Sigmoid colon (tissue), 7 donors: ENCODE measurements at regions of chr2 and their contacts with region 1.

Region 1: DNA sequence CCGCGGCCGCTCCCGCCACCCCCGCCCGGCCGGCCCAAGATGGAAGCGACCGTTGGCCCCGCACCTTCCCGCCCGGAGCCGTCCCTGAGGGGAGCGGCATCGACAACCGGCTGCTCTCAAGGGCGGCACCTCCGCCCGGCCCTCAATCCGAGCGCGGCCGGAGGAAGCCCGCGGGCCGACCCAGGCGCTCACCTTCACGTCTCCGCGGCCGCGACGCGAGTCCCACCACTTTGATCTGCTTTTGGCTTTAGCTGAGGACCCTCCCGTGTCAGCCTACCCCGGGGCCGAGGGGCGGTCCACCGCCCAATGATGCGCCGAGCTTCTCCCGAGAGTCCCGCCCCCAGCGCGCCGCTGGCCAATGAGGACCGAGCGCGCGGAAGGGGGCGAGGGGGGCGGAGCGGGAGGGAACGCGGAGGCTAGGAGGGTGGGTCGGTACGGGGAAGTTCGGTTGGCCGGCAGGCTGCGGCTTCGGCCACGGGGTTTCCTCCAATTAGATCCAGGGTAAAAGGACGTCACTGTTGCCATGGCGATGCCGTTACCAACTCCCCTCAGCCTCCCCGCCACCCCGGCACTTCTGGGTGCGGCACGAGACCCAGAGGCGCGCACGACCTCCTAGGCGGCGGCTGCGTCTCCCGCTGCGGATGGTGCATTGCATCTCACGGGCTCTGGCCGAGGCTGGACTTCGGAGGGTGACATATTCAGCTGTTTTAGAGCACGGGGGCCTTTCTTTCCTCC is at the start of gene YWHAQ:
- DNase-seq: peak; percentile 100
- H3K4me3 ChIP-seq: peak within 1 kb of the TSS; percentile 71 to 88 (median 82)
- H3K27ac ChIP-seq: peak within 1 kb of the TSS; percentile 95 to 98 (median 98)
- H3K4me1 ChIP-seq: peaks cover 0 to 43% (median 40%) of the 10 kb centered on the region in 4 donors
- H3K27me3 ChIP-seq: no peaks in the 10 kb centered on the region
- CTCF ChIP-seq: no peak
- EP300 ChIP-seq: peak in 2 of 4 donors; percentile 43 to 62
- POLR2A ChIP-seq: peak; percentile 85 to 91
- total RNA-seq, gene YWHAQ: 179 to 273 (median 229) TPM

Region 2: GRCh38 chr2:9423100-9423921 is 207.6 kb before region 1 on chr2 and contains the starts of genes CPSF3 and ITGB1BP1:
- intact Hi-C with region 1: loop called (anchors 5 kb)
- DNase-seq: peak; percentile 99
- H3K4me3 ChIP-seq: peak within 1 kb of the TSS; percentile 84 to 99 (median 93)
- H3K27ac ChIP-seq: peak within 1 kb of the TSS; percentile 94 to 97 (median 96)
- H3K4me1 ChIP-seq: peaks cover 0 to 38% (median 33%) of the 10 kb centered on the region in 4 donors
- H3K27me3 ChIP-seq: no peaks in the 10 kb centered on the region
- CTCF ChIP-seq: peak in 1 of 4 experiments; percentile 31
- EP300 ChIP-seq: peak in 1 of 4 donors; percentile 69
- POLR2A ChIP-seq: no peak
- total RNA-seq, gene CPSF3: 22.9 to 33.5 (median 27.5) TPM
- total RNA-seq, gene ITGB1BP1: 52.3 to 75.6 (median 61.6) TPM

Region 3: DNA sequence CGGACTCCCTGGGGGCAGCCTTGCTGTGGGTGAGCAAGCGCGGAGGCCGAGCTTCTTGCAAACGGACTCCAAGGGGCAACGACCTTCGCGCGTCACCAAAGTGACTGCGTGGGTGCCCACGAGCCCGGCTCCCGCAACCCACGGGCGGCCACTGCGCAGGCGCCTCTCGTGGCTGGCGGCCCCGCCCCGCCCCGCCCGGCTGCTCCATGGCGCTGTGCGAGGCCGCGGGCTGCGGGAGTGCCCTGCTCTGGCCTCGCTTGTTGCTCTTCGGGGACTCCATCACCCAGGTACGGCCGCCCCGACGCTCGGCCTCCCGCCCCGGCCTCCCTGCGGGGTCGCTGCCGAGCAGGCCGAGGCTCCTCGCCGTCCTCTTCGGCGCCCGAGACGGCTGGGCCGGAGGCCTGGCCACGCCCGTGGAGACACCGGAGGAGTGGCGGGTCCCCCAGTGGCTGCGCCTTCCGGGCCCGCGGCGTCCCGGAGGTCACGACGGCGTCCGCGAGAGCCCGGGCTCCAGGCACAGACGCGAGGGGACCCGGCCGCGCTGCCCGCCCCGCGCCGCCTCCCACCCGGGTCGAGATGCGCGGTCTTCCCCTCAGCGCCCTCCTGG is 156.5 kb before region 1 on chr2 and contains the start of gene IAH1:
- intact Hi-C with region 1: loop called (anchors 5 kb)
- DNase-seq: peak; percentile 81
- H3K4me3 ChIP-seq: peak within 1 kb of the TSS; percentile 63 to 92 (median 74)
- H3K27ac ChIP-seq: peak within 1 kb of the TSS; percentile 82 to 92 (median 87)
- H3K4me1 ChIP-seq: peaks cover 0 to 45% (median 34%) of the 10 kb centered on the region in 4 donors
- H3K27me3 ChIP-seq: no peaks in the 10 kb centered on the region
- CTCF ChIP-seq: no peak
- EP300 ChIP-seq: no peak
- POLR2A ChIP-seq: no peak
- total RNA-seq, gene IAH1: 62.3 to 94.9 (median 84.9) TPM

Region 4: DNA sequence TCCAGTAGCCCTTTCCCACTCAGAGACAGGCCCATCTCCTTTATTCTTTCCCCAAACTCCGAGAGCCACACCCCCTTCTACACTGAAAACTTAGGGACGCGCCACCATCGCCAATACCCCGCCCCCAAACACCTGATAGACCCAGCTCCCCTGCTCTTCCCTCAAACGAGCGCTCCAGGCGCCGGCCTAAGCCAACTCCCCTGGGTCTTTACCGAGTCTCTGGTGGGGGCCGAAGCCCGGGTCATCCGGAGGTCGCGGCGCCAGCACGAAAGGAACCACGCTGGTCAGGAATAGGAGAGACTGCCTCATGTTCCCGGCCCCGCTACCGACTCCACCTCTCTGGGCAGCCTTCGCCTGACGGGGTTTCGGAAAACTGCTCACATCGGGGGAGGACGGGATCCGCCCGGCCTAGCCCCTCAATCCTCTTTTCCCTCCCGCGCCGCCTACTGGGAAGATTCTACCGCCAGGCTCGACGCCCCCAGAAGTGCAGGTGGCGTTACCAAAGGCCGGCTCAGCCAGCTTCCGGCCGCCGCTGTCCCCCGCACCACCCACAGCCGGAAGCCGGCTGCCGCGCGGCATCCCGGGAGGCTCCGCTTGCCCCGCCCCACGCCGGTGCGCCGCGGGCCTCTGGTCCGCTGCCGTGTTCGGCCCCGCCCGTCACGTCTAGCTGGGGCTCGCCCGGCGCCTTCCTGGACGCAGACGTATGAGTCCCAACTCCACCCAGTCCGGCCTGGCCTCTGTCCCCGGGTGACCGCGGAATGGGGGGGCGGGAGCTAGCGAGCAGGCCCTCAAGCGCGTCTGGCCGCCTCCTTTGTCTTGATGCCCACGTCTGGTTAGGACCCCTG is 75.4 kb before region 1 on chr2 and contains the start of gene ADAM17:
- intact Hi-C with region 1: loop called (anchors 2 kb)
- DNase-seq: peak; percentile 98
- H3K4me3 ChIP-seq: peak within 1 kb of the TSS; percentile 63 to 96 (median 79)
- H3K27ac ChIP-seq: peak within 1 kb of the TSS; percentile 92 to 99 (median 98)
- H3K4me1 ChIP-seq: peaks cover 0 to 67% (median 48%) of the 10 kb centered on the region in 4 donors
- H3K27me3 ChIP-seq: no peaks in the 10 kb centered on the region
- CTCF ChIP-seq: peak; percentile 67 to 83 (median 70)
- EP300 ChIP-seq: peak in 2 of 4 donors; percentile 51 to 61
- POLR2A ChIP-seq: peak; percentile 88
- total RNA-seq, gene ADAM17: 12.1 to 17.6 (median 16.1) TPM

Region 5: DNA sequence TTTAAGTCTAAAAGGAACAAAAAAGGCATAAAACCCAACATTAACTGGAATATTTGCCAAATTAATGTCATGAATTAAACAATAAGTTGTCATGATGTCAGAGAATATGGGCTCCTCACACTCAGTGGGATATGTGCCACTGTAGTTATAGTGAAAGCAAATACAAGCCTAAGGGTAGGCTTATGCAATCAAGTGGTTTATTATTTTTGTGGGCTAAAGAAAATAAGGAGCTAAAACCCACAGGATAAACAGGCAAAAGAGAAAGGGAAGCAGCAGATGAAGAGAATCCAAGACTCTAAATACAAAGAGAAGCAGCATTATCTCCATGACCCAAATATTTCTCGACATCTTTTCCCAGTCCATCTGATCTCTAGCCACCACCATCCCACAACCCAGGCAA is 17.6 kb before region 1 on chr2:
- intact Hi-C with region 1: loop called (anchors 2 kb)
- DNase-seq: no peak
- H3K4me3 ChIP-seq: no peak overlapping the region
- H3K27ac ChIP-seq: no peak overlapping the region
- H3K4me1 ChIP-seq: peaks cover 0 to 90% (median 63%) of the 10 kb centered on the region in 4 donors
- H3K27me3 ChIP-seq: no peaks in the 10 kb centered on the region
- CTCF ChIP-seq: no peak
- EP300 ChIP-seq: no peak
- POLR2A ChIP-seq: no peak